ENCODE measurements at regions of chr1 and their contacts with region 1.

Region 1: DNA sequence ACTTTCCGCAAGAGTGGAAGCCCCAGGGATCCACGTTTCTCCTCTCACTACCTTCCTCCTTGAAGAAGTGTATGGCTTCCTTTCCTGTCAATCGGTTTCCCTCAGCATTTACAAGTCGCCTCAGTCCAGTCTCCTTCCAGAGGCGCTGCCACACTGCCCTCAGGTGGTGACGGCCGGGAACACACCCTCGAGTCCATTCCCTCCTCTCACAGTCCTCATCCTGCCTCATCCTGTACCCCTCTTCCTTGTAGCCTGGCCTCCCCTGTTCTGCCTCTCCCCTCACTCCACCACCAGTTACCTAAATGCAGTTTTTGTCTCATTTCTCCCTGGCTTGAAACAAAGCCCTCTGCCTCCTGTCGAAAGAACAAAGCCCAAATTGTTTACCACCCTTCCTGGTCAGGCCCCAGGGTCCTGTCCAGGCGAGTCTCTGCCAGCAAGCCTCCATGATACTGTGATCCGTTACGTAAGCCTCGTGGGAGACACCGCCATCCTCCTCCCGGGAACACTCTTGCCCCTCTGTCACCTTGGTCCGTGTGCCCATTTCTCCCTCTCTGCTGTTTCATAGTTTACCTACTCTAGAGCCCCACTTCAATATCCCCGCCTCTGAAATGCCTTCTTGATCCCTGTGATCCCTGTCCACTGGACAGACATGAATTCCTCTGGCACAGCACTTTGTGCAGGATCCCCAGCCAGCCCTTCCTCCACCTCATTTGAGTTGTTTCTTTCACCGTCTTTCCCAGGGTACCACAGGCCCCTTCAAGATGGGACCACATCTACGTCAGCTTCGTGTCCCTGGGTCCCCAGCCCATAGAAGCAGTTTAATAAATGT is 23.3 kb upstream of the LSM10 start:
- DNase-seq: peak; percentile 88
- ATAC-seq: peak; percentile 100
- H3K4me3 ChIP-seq: no peak overlapping the region
- H3K4me3 Mint-ChIP-seq: no peak overlapping the region
- H3K27ac ChIP-seq: no peak overlapping the region
- H3K27ac Mint-ChIP-seq: peak overlapping the region; percentile 37
- H3K4me1 ChIP-seq: peaks cover 4 to 5% of the 10 kb centered on the region in 2 donors
- H3K4me1 Mint-ChIP-seq: peaks cover 8% of the 10 kb centered on the region
- H3K27me3 ChIP-seq: no peaks in the 10 kb centered on the region
- H3K27me3 Mint-ChIP-seq: no peaks in the 10 kb centered on the region
- CTCF ChIP-seq: peak; percentile 97

Region 2: DNA sequence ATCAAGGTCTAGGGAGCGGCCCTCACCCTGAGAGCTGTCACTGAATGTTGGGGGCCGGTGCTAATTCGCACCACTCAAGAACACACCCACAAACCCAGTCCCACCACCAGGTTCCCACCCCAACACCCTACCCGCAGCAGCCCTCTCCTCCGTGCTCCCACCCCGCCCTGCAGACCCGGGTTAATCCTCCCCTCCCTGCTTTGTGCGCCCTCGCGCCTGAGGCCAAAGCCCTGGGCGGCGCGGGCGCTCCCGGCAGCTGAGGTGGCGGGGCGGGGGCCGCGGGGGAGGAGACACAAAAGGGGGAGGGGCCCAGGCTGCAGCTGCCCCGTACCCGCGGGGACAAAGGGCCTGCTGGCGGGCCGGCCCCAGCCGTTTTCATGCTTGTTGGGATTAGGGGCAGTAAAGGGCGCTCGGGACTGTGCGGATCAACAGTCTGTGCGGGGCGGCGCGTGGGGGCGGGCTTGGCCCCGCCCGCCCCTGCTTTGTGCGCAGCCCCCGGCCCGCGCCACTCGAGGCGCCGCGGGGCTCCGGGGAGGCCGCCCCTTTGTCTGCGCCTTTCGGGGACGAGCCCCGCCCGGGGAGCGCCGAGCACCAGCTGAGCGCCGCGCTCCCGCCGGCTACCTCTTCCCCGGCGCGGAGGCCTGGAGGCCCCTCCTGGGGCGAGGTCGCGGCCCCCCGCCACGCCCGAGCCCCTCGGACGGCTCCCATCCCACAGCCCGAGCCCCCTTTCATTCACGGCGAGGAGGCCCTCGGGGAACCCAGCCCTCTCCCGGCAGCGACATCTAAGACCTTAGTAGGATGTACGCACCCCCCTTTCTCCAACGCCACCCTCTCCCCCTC is 713.2 kb before region 1 on chr1:
- CTCF ChIA-PET with region 1: no interaction called
- POLR2A ChIA-PET with region 1: no interaction called
- intact Hi-C with region 1: no loop called
- DNase-seq: peak; percentile 30
- ATAC-seq: peak; percentile 33
- H3K4me3 ChIP-seq: peak overlapping the region in 4 of 5 experiments; percentile 13 to 46 (median 36)
- H3K4me3 Mint-ChIP-seq: peak overlapping the region; percentile 78
- H3K27ac ChIP-seq: no peak overlapping the region
- H3K27ac Mint-ChIP-seq: no peak overlapping the region
- H3K4me1 ChIP-seq: peaks cover 13 to 15% of the 10 kb centered on the region in 2 donors
- H3K4me1 Mint-ChIP-seq: peaks cover 20% of the 10 kb centered on the region
- H3K27me3 ChIP-seq: peaks cover 0 to 41% (median 22%) of the 10 kb centered on the region in 4 experiments
- H3K27me3 Mint-ChIP-seq: peaks cover 43% of the 10 kb centered on the region
- CTCF ChIP-seq: no peak

Region 3: GRCh38 chr1:36099681-36100341 is 321.2 kb before region 1 on chr1:
- CTCF ChIA-PET with region 1: interaction called, 4 read pairs
- POLR2A ChIA-PET with region 1: no interaction called
- intact Hi-C with region 1: loop called (anchors 2 kb)
- DNase-seq: peak; percentile 81
- ATAC-seq: peak; percentile 86
- H3K4me3 ChIP-seq: peak overlapping the region in 1 of 5 experiments; percentile 9
- H3K4me3 Mint-ChIP-seq: no peak overlapping the region
- H3K27ac ChIP-seq: no peak overlapping the region
- H3K27ac Mint-ChIP-seq: no peak overlapping the region
- H3K4me1 ChIP-seq: peaks cover 0 to 7% of the 10 kb centered on the region in 2 donors
- H3K4me1 Mint-ChIP-seq: peaks cover 2% of the 10 kb centered on the region
- H3K27me3 ChIP-seq: no peaks in the 10 kb centered on the region
- H3K27me3 Mint-ChIP-seq: no peaks in the 10 kb centered on the region
- CTCF ChIP-seq: peak; percentile 93

Region 4: GRCh38 chr1:36342481-36343478 is 78.3 kb before region 1 on chr1:
- CTCF ChIA-PET with region 1: interaction called, 98 read pairs
- POLR2A ChIA-PET with region 1: interaction called, 5 read pairs
- intact Hi-C with region 1: loop called (anchors 1 kb)
- DNase-seq: peak; percentile 71
- ATAC-seq: peak; percentile 76
- H3K4me3 ChIP-seq: no peak overlapping the region
- H3K4me3 Mint-ChIP-seq: no peak overlapping the region
- H3K27ac ChIP-seq: no peak overlapping the region
- H3K27ac Mint-ChIP-seq: no peak overlapping the region
- H3K4me1 ChIP-seq: peaks cover 0 to 5% of the 10 kb centered on the region in 2 donors
- H3K4me1 Mint-ChIP-seq: peaks cover 10% of the 10 kb centered on the region
- H3K27me3 ChIP-seq: no peaks in the 10 kb centered on the region
- H3K27me3 Mint-ChIP-seq: no peaks in the 10 kb centered on the region
- CTCF ChIP-seq: peak; percentile 68

Region 5: DNA sequence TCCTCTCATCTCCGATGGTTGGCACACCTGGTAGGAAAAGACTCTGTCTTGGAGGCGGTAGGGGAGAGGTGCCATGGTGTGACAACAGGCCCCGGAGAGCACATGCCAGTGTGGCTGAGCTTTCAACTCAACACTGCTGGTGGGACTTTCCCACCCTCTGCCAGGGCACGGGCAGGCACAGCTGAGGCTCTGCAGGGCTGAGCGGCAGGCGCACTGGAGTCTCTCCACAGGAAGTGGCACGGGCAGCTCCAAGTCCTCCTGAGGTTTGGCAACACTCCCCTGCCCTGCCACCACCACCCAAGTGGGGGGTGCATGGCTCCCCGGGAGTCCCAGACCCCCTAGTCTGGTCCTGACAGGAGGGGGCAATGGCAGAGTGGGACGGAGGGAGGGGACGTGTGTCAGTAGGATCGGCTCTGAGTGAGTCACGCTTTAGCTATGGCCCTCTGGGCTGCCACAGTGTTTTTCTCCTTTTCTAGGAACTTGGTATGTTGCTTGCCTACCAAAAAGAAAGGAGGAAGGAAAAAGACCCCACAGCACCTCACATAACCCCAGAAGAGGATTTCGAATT is 70.3 kb before region 1 on chr1:
- CTCF ChIA-PET with region 1: interaction called, 98 read pairs
- POLR2A ChIA-PET with region 1: no interaction called
- intact Hi-C with region 1: no loop called
- DNase-seq: peak; percentile 40
- ATAC-seq: peak; percentile 70
- H3K4me3 ChIP-seq: no peak overlapping the region
- H3K4me3 Mint-ChIP-seq: no peak overlapping the region
- H3K27ac ChIP-seq: peak overlapping the region in 1 of 2 donors; percentile 13
- H3K27ac Mint-ChIP-seq: peak overlapping the region; percentile 63
- H3K4me1 ChIP-seq: peaks cover 13 to 25% of the 10 kb centered on the region in 2 donors
- H3K4me1 Mint-ChIP-seq: peaks cover 14% of the 10 kb centered on the region
- H3K27me3 ChIP-seq: no peaks in the 10 kb centered on the region
- H3K27me3 Mint-ChIP-seq: no peaks in the 10 kb centered on the region
- CTCF ChIP-seq: no peak

Region 6: GRCh38 chr1:36397378-36398230 is 23.4 kb before region 1 on chr1 and contains the start of gene LSM10:
- CTCF ChIA-PET with region 1: interaction called, 18 read pairs
- POLR2A ChIA-PET with region 1: interaction called, 3 read pairs
- intact Hi-C with region 1: no loop called
- DNase-seq: peak; percentile 93
- ATAC-seq: peak; percentile 88
- H3K4me3 ChIP-seq: peak within 1 kb of the TSS; percentile 76 to 99 (median 97)
- H3K4me3 Mint-ChIP-seq: peak within 1 kb of the TSS; percentile 92
- H3K27ac ChIP-seq: peak within 1 kb of the TSS; percentile 78 to 93
- H3K27ac Mint-ChIP-seq: peak within 1 kb of the TSS; percentile 94
- H3K4me1 ChIP-seq: peaks cover 20 to 47% of the 10 kb centered on the region in 2 donors
- H3K4me1 Mint-ChIP-seq: peaks cover 55% of the 10 kb centered on the region
- H3K27me3 ChIP-seq: no peaks in the 10 kb centered on the region
- H3K27me3 Mint-ChIP-seq: no peaks in the 10 kb centered on the region
- CTCF ChIP-seq: no peak
- total RNA-seq, gene LSM10: 70.6 and 73.5 TPM in 2 replicates

Measured in B cell (primary cell).